ENCODE measurements at regions of chr7 and their contacts with region 1.

Region 1: GRCh38 chr7:129468087-129468486 is 33.9 kb downstream of the STRIP2 start:
- DNase-seq: peak; percentile 57
- H3K4me3 ChIP-seq: no peak overlapping the region
- CTCF ChIP-seq: no peak

Region 2: GRCh38 chr7:129163875-129164544 is 304.1 kb before region 1 on chr7:
- CTCF ChIA-PET with region 1: interaction called, 10 read pairs
- POLR2A ChIA-PET with region 1: no interaction called
- DNase-seq: peak; percentile 14
- H3K4me3 ChIP-seq: no peak overlapping the region
- CTCF ChIP-seq: peak; percentile 59

Region 3: DNA sequence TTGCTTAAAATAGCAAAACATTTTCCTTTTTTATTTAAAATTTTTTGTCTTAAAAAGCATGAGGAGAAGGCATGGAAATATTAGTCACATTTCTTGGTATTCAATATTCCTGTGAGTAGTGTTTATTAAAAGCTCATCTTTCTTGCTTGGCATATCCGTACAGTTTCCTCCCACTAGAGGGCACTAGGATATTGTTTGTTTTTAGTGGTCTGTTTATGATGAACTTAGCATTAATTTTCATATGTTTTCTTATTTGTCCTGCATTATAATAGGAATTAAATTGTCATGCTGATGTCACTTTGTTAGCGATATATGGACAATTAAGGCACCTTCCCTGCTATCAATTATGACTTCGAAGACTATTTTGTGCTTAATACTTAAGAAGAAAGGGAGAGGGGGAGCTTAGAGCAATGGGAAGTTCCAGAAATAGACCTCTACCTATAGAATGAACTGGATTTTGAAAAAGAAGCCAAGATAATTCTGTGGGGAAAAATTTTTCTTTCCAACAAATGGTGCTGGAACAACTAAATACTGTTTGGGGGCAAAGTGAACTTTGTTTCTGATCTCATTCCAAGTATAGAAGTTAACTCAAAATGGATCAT is 124.9 kb before region 1 on chr7:
- CTCF ChIA-PET with region 1: interaction called, 87 read pairs
- POLR2A ChIA-PET with region 1: no interaction called
- DNase-seq: no peak
- H3K4me3 ChIP-seq: no peak overlapping the region
- CTCF ChIP-seq: peak; percentile 48

Region 4: GRCh38 chr7:129376076-129376777 is 91.9 kb before region 1 on chr7:
- CTCF ChIA-PET with region 1: interaction called, 504 read pairs
- POLR2A ChIA-PET with region 1: no interaction called
- DNase-seq: no peak
- H3K4me3 ChIP-seq: no peak overlapping the region
- CTCF ChIP-seq: peak; percentile 47

Region 5: GRCh38 chr7:129480674-129481365 is 12.7 kb after region 1 on chr7:
- CTCF ChIA-PET with region 1: interaction called, 41 read pairs
- POLR2A ChIA-PET with region 1: no interaction called
- DNase-seq: no peak
- H3K4me3 ChIP-seq: no peak overlapping the region
- CTCF ChIP-seq: no peak

Measured in AG04449 (cell line).